ENCODE measurements at regions of chr5 and their contacts with region 1.

Region 1: DNA sequence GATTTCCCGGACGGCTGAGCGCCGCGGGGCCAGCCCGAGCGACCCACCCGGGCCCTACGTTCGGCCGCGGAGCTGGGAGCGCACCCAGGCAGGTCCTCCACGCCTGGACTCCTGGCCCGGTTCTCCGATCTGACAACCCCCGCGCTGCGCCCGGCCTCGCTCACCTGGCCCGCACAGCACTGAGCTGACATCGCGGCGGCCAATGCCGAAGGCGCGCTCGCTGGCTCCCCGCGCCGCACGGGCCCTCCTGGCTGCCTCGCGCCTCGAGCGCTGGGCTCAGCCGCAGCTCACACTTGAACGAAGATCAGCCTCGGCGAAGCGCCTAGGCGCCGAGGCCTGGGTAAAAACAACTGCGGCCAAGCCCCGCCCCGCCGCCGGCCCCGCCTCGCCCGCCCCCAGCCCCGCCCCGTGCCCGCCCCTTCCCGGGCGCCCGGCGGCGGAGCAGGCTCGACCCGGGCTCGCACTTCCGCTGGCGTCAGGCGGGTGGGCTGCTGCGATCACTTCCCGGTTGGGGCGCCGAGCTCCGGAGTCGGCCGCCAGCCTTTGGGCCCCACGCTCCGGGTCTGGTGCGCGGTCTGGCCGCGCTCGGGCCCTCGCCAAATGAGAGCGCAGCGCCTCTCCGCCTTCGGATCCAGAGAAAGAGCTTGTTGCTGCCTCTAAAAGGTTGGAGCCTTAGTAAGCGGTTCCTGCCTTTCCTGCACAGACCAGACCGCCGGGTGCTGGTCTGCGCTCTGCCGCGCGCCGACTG is at the start of gene SERINC5:
- DNase-seq: peak; percentile 73 to 92 (median 84)
- H3K4me3 ChIP-seq: peak within 1 kb of the TSS; percentile 54 to 98 (median 86)
- H3K27ac ChIP-seq: peak within 1 kb of the TSS; percentile 83 to 98 (median 94)
- H3K27me3 ChIP-seq: no peaks in the 10 kb centered on the region
- CTCF ChIP-seq: peak in 14 of 56 donors; percentile 5 to 43 (median 20)
- total RNA-seq, gene SERINC5: 25.0 to 117 (median 44.7) TPM

Region 2: DNA sequence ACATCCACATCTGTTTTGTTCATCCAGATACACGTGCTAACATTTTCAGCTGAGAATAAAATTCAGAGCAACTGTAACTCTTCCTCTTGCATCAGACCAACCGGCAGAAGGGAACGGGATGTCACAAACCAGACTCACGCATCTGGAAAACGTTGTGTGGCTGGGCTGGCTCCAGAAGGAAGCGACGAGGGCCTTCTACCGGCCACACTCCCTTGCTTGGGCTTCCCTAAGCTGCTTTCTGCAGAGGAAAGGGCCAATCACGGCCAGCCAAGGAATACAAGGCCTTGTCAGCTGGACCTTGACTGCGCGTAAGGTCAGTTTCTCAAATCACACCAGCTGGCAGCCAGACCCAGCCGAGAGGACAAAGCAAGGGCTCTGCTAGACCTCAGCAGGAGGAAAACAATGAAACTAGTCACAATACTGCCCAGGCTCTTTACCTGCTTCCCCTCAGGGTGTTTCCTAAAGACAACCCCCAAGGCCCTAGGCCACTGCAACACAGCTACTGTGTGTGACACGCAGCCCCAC is 114.7 kb before region 1 on chr5:
- intact Hi-C with region 1: loop called (anchors 5 kb)
- DNase-seq: peak in 9 of 10 donors; percentile 3 to 66 (median 48)
- H3K4me3 ChIP-seq: no peak overlapping the region
- H3K27ac ChIP-seq: peak overlapping the region; percentile 46 to 93 (median 85)
- H3K27me3 ChIP-seq: no peaks in the 10 kb centered on the region
- CTCF ChIP-seq: peak in 1 of 56 donors; percentile 6

Region 3: DNA sequence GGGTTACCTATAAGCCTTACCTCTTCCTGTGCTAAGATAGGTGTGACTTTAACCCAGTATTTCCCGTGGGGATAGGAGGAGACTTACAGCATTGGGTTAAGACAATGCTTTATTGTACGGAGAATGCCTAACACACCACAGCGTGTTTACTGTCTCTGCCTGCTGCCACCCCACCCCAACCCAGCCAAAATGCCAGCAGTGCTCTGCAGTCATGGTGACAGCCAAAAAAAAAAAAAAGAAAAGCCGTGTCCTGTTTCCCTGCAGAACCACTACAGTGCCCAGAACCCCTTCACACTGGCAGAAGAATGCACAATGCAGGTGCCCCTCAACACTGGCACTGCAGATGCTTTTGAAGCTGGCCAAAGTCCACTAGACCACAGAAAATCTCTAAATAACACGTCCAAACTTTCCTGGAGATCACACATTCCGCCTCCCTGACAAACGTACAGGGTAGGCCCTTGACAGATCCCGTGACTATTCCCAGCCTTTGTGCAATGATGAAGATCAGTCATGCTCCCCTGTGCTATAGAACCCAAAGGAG is 102.2 kb before region 1 on chr5:
- intact Hi-C with region 1: loop called in 1 of 2 experiments (anchors 5 kb)
- DNase-seq: peak in 5 of 10 donors; percentile 44 to 56 (median 51)
- H3K4me3 ChIP-seq: peak overlapping the region in 4 of 59 donors; percentile 1 to 30 (median 10)
- H3K27ac ChIP-seq: peak overlapping the region in 58 of 59 donors; percentile 16 to 92 (median 80)
- H3K27me3 ChIP-seq: no peaks in the 10 kb centered on the region
- CTCF ChIP-seq: no peak

Region 4: DNA sequence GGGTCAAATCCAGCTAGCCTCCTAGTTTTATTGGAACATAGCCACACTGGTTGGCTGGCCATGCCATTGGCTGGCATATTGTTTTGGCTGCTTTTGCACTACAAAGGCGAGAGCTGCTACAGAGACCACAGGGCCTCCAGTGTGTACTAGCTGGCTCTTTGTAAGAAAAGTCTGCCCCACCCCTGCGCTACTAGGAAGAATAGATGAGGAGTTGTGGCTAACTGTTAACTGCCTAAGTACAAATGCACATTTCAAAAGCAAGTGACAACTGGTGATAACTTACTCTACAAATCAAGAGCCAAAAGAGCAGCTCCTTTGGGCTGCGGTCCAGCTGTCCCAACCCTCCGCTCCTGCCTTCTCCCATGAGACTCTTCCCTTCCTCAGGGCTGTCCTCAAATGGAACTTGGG is 63.9 kb before region 1 on chr5:
- intact Hi-C with region 1: loop called (anchors 5 kb)
- DNase-seq: peak in 6 of 10 donors; percentile 50 to 74 (median 64)
- H3K4me3 ChIP-seq: peak overlapping the region in 28 of 59 donors; percentile 0 to 41 (median 10)
- H3K27ac ChIP-seq: peak overlapping the region; percentile 51 to 97 (median 87)
- H3K27me3 ChIP-seq: no peaks in the 10 kb centered on the region
- CTCF ChIP-seq: no peak

Region 5: DNA sequence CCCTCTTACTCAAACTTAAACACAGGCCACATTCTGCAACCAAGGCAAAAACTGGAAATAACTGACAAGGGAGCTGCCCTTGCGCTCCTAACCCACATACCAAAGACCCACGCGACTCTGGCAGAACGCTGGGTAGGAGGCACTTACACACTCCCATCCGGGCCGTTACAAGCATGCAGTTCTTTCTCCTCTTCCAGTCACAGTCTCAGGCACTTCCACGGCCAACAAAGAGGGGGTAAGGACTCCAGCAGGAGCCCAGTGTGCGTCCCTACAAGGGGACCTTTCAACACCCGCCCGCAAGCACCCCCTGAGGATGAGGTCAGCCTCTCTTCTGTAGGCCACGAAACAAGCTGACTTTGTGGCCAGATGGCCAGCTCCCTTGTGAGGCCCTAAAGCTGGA is 57.5 kb before region 1 on chr5:
- intact Hi-C with region 1: loop called (anchors 5 kb)
- DNase-seq: peak; percentile 23 to 95 (median 88)
- H3K4me3 ChIP-seq: peak overlapping the region in 27 of 59 donors; percentile 0 to 44 (median 21)
- H3K27ac ChIP-seq: peak overlapping the region; percentile 53 to 97 (median 89)
- H3K27me3 ChIP-seq: no peaks in the 10 kb centered on the region
- CTCF ChIP-seq: peak in 6 of 56 donors; percentile 5 to 42 (median 12)

Region 6: DNA sequence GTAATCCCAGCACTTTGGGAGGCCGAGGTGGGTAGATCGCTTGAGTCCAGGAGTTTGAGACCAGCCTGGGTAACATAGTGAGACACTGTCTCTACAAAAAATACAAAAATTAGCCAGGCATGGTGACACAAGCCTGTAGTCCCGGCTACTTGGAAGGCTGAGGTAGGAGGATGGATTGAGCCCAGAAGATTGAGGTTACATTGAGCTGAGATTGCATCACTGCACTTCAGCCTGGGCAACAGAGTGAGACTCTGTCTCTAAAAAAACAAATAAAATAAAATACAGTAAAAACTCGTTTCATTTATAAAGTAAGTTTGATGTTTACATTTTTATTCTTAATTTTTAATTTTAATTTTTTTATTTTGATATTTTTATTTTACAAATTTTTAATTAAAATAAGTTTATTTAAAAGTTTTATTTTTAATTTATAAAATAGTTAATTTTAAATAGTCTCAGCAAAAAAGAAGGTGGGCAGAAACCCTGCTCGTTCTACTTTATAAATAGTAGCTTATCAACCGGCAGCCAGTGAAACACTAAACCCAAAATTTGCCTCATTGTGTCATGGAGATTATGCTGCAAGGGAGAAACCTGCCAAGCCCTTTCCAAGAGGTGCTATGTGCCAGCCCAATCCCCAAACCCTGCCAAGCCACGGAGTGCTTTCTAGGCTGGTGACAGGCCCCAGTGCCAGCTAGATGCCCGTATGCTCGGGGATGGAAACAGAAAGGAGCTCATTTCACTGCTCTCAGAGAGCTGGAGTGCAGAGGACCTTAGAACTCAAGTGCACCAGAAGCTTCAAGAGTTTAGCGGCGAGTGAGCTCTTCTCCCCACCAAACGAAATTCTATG is 38.9 kb before region 1 on chr5:
- intact Hi-C with region 1: loop called (anchors 2 to 5 kb)
- DNase-seq: peak; percentile 56 to 92 (median 78)
- H3K4me3 ChIP-seq: peak overlapping the region in 30 of 59 donors; percentile 1 to 51 (median 22)
- H3K27ac ChIP-seq: peak overlapping the region in 58 of 59 donors; percentile 16 to 90 (median 76)
- H3K27me3 ChIP-seq: no peaks in the 10 kb centered on the region
- CTCF ChIP-seq: no peak

Region 7: GRCh38 chr5:80407735-80408482 is 152.0 kb after region 1 on chr5 and contains the start of gene ZFYVE16:
- intact Hi-C with region 1: loop called (anchors 2 to 5 kb)
- DNase-seq: peak; percentile 95 to 98 (median 98)
- H3K4me3 ChIP-seq: peak within 1 kb of the TSS; percentile 63 to 100 (median 92)
- H3K27ac ChIP-seq: peak within 1 kb of the TSS; percentile 88 to 100 (median 99)
- H3K27me3 ChIP-seq: no peaks in the 10 kb centered on the region
- CTCF ChIP-seq: peak in 28 of 56 donors; percentile 4 to 54 (median 31)
- total RNA-seq, gene ZFYVE16: 59.0 to 215 (median 92.5) TPM